ENCODE measurements at regions of chr15 and their contacts with region 1.

Region 1: DNA sequence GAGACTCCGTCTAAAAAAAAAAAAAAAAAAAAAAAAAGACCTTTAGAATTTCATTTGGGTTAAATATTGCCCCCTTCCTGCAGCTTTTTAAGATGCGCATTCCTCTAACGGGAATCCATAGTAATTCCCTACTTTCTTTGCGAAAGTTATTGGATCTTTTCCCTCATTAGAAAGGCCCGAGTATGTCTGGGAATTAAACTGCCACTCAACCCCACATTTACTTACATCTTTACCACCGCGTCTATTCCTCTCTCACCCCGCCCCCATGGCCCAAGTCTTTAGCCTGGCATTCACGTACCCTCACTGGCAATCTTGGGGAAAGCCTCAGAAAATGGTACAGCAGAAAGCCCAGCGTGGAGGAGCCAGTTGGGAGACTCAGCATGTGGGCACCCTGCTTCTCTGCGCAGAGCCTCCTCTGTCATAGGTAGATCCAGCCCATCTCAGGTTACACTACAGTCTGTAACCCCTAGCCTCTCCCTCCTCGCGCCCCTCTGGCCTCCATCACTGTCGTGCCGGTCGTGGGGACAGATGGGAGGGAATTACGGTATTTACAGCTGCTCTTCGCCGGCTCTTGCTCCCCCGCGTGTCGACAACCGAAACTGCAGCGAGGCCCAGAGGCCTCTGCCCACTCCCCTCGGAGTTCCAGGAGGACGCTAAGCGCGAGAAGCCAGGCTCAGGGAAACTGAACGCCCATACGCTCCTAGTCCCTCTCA is 6.4 kb upstream of the ANKDD1A start:
- DNase-seq: peak; percentile 87
- H3K4me3 Mint-ChIP-seq: peak overlapping the region; percentile 29
- H3K27ac Mint-ChIP-seq: peak overlapping the region; percentile 20
- H3K4me1 Mint-ChIP-seq: peaks cover 44% of the 10 kb centered on the region
- H3K27me3 Mint-ChIP-seq: peaks cover 12% of the 10 kb centered on the region

Region 2: DNA sequence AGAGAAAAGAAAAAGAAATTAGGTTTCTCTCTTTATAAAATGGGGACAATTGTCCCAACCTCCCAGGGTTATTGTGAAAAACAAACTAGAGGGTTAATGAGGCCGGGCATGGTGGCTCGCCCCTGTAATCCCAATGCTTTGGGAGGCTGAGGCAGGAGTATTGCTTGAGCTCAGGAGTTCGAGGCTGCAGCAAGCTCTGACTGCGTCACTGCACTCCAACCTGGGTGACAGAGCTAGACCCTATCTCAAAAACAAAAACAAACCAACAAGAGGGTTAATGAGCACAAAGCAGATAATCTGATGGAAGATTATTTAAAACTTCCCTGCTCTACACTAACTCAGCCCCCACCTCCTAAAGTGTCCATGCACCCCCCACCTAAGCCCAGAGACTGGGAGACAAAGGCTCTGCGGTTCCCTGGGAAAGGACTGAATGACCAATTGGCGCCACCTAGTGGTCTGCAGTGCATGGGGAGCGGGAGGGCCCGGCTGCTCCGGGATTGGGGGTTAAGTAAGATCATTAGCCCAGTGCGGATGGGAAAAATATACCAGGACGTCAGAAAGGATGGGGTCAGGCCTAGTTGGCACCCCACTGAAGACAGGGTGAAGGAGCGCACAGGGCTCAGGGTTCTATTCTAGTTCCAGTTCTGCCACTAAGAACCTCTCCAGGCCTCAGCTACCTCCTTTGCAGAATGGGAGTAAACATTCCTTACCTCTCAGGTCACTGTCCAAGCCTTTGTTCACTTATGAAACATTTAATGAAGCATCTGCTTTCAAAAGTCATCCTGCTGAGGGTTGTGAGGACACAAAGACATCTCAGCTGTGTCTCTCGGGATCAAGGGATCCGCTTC is 95.4 kb before region 1 on chr15:
- CTCF ChIA-PET with region 1: interaction called, 16 read pairs
- DNase-seq: peak; percentile 83
- H3K4me3 Mint-ChIP-seq: no peak overlapping the region
- H3K27ac Mint-ChIP-seq: no peak overlapping the region
- H3K4me1 Mint-ChIP-seq: no peaks in the 10 kb centered on the region
- H3K27me3 Mint-ChIP-seq: peaks cover 51% of the 10 kb centered on the region

Region 3: GRCh38 chr15:65163041-65163440 is 257.8 kb after region 1 on chr15:
- CTCF ChIA-PET with region 1: no interaction called
- DNase-seq: no peak
- H3K4me3 Mint-ChIP-seq: no peak overlapping the region
- H3K27ac Mint-ChIP-seq: no peak overlapping the region
- H3K4me1 Mint-ChIP-seq: no peaks in the 10 kb centered on the region
- H3K27me3 Mint-ChIP-seq: no peaks in the 10 kb centered on the region

Measured in activated naive CD4-positive, alpha-beta T cell treated with anti-CD3 and anti-CD28 coated beads, Interleukin-2, amount 10 ng/mL, durations not matched to agents 7 days and 5 days (primary cell).